Activated CD4-positive, alpha-beta memory T cell treated with anti-CD3 and anti-CD28 coated beads, Interleukin-2, amount 10 ng/mL, durations not matched to agents 7 days and 5 days (primary cell): ENCODE measurements at regions of chr22 and their contacts with region 1.

Region 1: DNA sequence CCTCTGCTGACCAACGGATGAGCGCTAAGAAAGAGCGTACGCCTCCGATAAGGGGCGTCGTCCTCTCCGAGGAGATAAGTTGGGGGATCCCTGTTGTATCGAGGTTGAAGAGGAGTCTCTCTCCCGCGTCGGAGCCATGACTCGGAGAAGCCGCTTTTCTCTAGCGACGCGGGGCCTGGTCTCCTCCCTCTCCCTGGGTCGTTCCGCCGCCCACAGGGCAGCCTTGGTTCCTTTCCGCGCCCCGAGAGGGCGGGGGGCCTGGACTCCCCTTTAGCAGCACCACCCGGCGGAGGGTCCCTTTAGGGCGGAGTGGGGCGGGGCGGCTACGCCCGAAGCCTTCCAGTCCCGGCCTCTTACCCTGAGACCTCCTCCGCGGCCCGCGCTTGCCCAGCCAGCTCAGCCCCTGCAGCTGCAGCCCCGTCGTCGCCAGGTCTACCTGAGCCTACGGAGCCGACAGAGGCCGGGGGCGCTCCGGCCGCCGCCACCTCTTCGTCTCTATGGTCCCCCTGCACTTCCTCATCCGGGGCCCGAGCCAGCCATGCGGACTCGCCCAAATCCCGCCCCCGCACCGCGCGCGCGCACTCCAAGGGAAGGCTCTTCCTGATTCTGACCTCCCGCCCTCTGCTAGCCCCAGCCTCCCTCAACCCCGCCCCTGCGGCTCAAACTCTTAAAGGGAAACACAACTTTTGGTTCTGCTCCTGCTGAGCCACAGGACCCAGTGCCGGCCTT is at the start of gene PRR14L:
- DNase-seq: peak; percentile 98
- H3K4me3 Mint-ChIP-seq: peak within 1 kb of the TSS; percentile 91
- H3K27ac Mint-ChIP-seq: peak within 1 kb of the TSS; percentile 86
- H3K4me1 Mint-ChIP-seq: peaks cover 61% of the 10 kb centered on the region
- H3K27me3 Mint-ChIP-seq: no peaks in the 10 kb centered on the region
- total RNA-seq, gene PRR14L: 56.3 to 61.3 TPM

Region 2: DNA sequence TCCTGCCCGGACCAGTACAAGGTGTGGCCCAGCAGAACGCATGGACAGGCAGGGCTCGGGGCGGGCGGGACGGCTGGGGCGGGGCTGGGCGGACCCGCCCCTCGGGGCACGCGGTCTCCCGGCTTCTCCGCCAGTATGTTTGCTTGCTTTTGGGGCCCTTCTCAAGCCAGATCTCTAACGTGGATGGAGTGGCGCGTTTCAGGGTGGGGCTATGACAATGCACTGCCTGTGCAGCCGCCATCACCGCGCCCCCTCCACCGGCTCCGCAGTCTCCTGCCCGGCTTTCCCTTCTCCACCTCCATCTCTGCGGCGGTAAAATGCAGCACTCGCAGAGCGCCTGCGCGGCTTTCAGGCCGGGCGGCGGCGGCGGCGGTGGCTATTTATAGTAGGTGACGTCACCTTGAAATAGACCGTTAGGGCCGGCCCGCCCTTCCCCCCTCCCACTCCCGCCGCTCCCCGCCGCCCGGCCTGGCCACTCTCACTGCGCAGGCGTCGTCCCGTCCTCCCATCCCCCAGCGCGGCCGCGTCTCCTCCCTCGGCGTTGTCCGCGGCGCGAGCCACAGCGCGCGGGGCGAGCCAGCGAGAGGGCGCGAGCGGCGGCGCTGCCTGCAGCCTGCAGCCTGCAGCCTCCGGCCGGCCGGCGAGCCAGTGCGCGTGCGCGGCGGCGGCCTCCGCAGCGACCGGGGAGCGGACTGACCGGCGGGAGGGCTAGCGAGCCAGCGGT is 194.3 kb after region 1 on chr22 and contains the start of gene YWHAH:
- CTCF ChIA-PET with region 1: no interaction called
- POLR2A ChIA-PET with region 1: interaction called, 10 read pairs
- DNase-seq: peak; percentile 93
- H3K4me3 Mint-ChIP-seq: no peak within 1 kb of the TSS
- H3K27ac Mint-ChIP-seq: peak within 1 kb of the TSS; percentile 91
- H3K4me1 Mint-ChIP-seq: peaks cover 31% of the 10 kb centered on the region
- H3K27me3 Mint-ChIP-seq: no peaks in the 10 kb centered on the region
- total RNA-seq, gene YWHAH: 203 to 211 TPM